B cell (primary cell): ENCODE measurements at regions of chr12 and their contacts with region 1.

Region 1: DNA sequence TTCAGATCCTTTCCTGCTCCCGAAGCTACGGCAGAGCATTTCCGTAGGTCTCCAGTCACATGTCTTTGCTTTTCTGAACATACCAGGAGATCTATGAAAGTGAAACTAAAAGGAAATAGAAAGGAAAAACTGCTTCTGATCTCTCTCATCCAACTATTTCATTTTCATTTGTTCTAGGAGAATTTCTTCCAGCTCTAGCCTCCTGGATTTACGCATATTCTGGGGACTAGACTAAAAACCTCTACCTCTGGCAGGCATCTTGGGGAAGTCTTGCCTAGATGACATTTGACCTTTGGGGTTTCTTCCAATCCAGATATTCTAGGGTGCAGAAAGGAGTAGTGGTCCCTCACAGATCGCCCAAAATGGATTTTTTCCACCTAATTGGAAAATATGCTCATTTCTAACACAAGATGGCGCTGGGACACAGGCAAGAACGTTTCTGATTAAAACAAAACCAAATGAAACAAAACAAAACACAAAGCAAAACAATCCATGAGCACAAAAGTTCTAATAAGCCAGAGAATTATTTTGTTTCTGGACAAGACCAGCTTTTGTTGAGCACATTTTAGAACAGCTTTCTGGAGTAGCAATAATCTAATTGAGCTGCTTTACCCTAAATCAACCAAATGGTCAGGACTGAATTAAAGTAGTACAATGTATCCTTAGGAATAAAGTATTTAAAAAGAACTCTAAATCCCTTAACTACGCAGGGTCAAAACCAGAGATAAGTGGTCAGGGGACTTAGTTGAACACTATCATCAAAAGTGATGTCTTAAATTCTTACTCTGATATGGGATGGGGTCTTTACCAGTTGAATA is 12.3 kb upstream of the PARP11 start:
- DNase-seq: peak; percentile 72
- ATAC-seq: no peak
- H3K4me3 ChIP-seq: no peak overlapping the region
- H3K4me3 Mint-ChIP-seq: no peak overlapping the region
- H3K27ac ChIP-seq: no peak overlapping the region
- H3K27ac Mint-ChIP-seq: no peak overlapping the region
- H3K4me1 ChIP-seq: peaks cover 2 to 7% of the 10 kb centered on the region in 2 donors
- H3K4me1 Mint-ChIP-seq: peaks cover 4% of the 10 kb centered on the region
- H3K27me3 ChIP-seq: peaks cover 0 to 13% (median 6%) of the 10 kb centered on the region in 4 experiments
- H3K27me3 Mint-ChIP-seq: peaks cover 8% of the 10 kb centered on the region
- CTCF ChIP-seq: peak; percentile 88

Region 2: DNA sequence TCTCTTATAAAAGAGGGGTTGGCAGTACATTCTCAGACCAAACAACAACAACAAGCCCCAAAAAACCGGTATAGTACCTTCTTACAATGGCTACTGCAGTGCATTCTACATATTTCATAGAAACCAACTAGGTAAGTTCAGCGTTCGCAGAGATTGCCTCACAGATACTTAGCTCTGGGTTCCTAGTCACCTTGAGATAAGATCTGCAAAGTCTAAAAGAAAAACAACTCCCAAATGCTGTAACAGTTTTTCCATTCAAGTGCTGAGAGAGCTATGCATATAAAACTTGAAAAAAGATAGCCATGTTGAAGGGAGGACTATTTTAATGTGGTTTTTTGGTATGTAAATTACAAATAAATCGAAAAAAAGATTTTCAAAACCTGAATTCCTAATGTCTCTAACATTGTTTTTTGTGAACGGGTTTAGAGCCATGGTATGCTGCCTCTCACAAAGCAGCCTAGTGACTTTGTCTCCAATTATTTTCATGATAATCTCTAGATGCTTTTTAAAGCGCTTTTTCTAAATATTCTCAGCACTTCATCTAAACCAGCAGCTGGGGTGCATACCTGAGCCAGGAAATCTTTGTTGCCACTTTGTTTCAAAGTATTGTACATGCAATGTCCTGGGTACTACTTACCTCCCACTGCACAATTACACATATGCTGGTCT is 76.0 kb before region 1 on chr12:
- CTCF ChIA-PET with region 1: no interaction called
- POLR2A ChIA-PET with region 1: no interaction called
- intact Hi-C with region 1: no loop called
- DNase-seq: no peak
- ATAC-seq: no peak
- H3K4me3 ChIP-seq: no peak overlapping the region
- H3K4me3 Mint-ChIP-seq: no peak overlapping the region
- H3K27ac ChIP-seq: no peak overlapping the region
- H3K27ac Mint-ChIP-seq: no peak overlapping the region
- H3K4me1 ChIP-seq: no peaks in the 10 kb centered on the region
- H3K4me1 Mint-ChIP-seq: peaks cover 2% of the 10 kb centered on the region
- H3K27me3 ChIP-seq: no peaks in the 10 kb centered on the region
- H3K27me3 Mint-ChIP-seq: no peaks in the 10 kb centered on the region
- CTCF ChIP-seq: no peak

Region 3: GRCh38 chr12:3964439-3964838 is 79.0 kb after region 1 on chr12:
- CTCF ChIA-PET with region 1: interaction called, 15 read pairs
- POLR2A ChIA-PET with region 1: no interaction called
- intact Hi-C with region 1: no loop called
- DNase-seq: peak; percentile 28
- ATAC-seq: no peak
- H3K4me3 ChIP-seq: no peak overlapping the region
- H3K4me3 Mint-ChIP-seq: no peak overlapping the region
- H3K27ac ChIP-seq: no peak overlapping the region
- H3K27ac Mint-ChIP-seq: no peak overlapping the region
- H3K4me1 ChIP-seq: peaks cover 9 to 10% of the 10 kb centered on the region in 2 donors
- H3K4me1 Mint-ChIP-seq: peaks cover 12% of the 10 kb centered on the region
- H3K27me3 ChIP-seq: no peaks in the 10 kb centered on the region
- H3K27me3 Mint-ChIP-seq: peaks cover 3% of the 10 kb centered on the region
- CTCF ChIP-seq: peak; percentile 21

Region 4: DNA sequence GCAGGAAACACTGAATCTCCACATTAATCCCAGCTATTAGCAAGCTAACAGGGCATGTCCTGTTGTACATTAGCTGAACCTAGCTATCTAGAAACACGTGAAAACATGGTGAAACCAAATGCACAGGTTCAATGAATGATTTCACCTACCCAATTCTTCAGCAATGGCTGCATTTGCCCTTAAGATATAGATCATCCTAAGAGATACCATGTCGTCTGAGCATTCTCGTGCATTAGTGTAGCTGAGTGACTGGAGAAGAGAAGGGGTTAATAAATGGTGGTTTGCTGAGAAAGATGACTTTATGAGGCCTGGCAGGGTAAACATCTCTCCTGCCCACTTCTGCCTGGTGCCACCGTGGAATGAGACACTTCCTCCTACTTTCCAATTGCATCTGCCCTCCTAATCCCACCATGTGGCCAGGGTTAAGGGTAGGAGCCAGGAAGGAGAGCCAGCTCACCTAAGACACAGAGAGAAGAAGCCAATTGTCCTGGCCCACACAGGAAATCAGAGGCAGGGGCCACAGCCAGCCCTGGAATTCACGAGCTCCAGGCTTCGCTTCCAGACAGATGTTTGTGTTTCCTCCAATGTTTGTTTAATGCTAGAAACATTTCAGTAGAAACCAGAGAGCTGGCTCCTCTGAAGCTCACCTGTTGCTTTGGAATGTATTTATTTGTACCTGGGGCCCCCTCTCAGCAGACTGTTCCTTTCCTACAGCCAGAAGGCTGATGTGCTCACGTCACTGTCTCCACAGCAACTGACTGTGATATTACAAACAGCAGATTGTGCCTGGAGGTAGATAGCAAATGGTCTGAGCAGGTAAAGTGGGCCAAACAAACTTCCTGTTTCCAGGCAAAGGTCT is 113.7 kb after region 1 on chr12:
- CTCF ChIA-PET with region 1: interaction called, 48 read pairs
- POLR2A ChIA-PET with region 1: no interaction called
- intact Hi-C with region 1: loop called (anchors 1 kb)
- DNase-seq: no peak
- ATAC-seq: no peak
- H3K4me3 ChIP-seq: no peak overlapping the region
- H3K4me3 Mint-ChIP-seq: no peak overlapping the region
- H3K27ac ChIP-seq: no peak overlapping the region
- H3K27ac Mint-ChIP-seq: no peak overlapping the region
- H3K4me1 ChIP-seq: peaks cover 4 to 7% of the 10 kb centered on the region in 2 donors
- H3K4me1 Mint-ChIP-seq: peaks cover 4% of the 10 kb centered on the region
- H3K27me3 ChIP-seq: peaks cover 0 to 3% (median under 1%) of the 10 kb centered on the region in 4 experiments
- H3K27me3 Mint-ChIP-seq: peaks cover 4% of the 10 kb centered on the region
- CTCF ChIP-seq: no peak

Region 5: DNA sequence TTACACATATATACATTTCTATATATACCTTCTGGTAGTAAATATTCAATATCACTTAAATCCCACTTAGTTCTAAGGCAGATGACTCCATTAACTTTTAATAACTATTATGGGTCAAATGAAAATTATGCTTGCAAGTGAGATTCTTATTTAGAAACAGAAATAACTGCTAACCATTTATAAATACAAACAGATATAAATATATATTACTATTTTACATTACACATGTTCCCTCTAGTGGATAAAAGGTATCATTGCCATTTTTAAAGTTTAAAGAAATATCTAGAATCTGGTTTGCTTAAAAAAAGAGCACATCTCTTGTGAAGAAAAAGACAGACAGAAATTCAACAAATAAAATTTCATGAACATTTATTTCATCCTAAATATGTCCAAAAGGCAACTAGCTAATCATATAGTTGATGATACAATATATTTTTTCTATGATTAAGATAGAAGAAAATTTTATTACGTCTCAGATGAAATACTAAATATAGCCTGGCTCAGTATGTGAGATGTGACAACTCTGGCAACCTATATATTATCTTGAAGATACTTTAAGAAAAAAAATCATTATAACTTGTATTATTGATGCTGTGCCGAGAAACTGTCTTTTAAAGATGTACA is 641.5 kb after region 1 on chr12:
- CTCF ChIA-PET with region 1: interaction called, 43 read pairs
- POLR2A ChIA-PET with region 1: no interaction called
- intact Hi-C with region 1: loop called (anchors 1 kb)
- DNase-seq: peak; percentile 34
- ATAC-seq: no peak
- H3K4me3 ChIP-seq: no peak overlapping the region
- H3K4me3 Mint-ChIP-seq: no peak overlapping the region
- H3K27ac ChIP-seq: no peak overlapping the region
- H3K27ac Mint-ChIP-seq: no peak overlapping the region
- H3K4me1 ChIP-seq: no peaks in the 10 kb centered on the region
- H3K4me1 Mint-ChIP-seq: no peaks in the 10 kb centered on the region
- H3K27me3 ChIP-seq: no peaks in the 10 kb centered on the region
- H3K27me3 Mint-ChIP-seq: no peaks in the 10 kb centered on the region
- CTCF ChIP-seq: peak; percentile 91